CD8-positive, alpha-beta T cell (primary cell): ENCODE measurements at regions of chr16 and their contacts with region 1.

Region 1: DNA sequence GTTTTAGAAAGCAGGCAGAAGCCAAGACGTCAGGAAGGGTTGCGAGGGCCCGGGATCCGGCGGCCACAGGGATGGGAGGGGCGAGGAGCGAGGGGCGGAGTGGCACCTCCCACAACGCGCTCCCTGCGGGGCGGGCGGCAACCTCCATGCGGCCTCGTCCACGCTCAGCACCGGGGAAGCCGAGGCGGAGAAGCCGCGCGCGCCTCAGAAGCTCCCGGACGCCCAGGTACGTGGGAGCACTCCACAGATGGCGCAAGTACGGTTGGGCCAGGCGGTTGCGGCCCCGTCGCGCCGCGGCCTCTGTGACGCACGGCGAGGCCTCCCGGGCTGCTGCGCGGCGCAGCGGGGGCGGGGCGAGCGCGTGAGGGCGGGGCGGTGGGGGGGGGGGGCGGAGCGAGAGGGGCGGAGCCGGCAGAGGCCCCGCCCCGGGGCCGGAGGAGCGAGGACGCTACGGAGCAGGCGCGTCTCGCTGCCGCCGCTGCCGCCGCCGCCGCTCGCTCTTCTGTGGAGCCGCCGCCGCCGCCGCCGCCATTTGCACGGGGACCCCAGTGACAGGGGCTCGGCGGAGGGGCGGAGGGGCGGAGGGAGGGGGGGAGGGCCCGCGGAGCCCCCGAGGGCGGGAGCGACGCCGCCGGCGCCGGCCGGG is at the start of gene TENT4B:
- DNase-seq: peak; percentile 82 to 96 (median 91)
- ATAC-seq: peak; percentile 77
- H3K4me3 ChIP-seq: peak within 1 kb of the TSS; percentile 67 to 79
- H3K4me3 Mint-ChIP-seq: peak within 1 kb of the TSS; percentile 93
- H3K27ac ChIP-seq: peak within 1 kb of the TSS; percentile 93
- H3K27ac Mint-ChIP-seq: peak within 1 kb of the TSS; percentile 95
- H3K4me1 ChIP-seq: peaks cover 40% of the 10 kb centered on the region
- H3K4me1 Mint-ChIP-seq: peaks cover 37% of the 10 kb centered on the region
- H3K27me3 ChIP-seq: no peaks in the 10 kb centered on the region
- H3K27me3 Mint-ChIP-seq: no peaks in the 10 kb centered on the region
- CTCF ChIP-seq: no peak
- total RNA-seq, gene TENT4B: 60.2 to 62.1 TPM

Region 2: GRCh38 chr16:50024684-50025536 is 128.0 kb before region 1 on chr16 and contains the start of gene CNEP1R1:
- CTCF ChIA-PET with region 1: interaction called, 5 read pairs
- POLR2A ChIA-PET with region 1: interaction called, 7 read pairs
- intact Hi-C with region 1: loop called (anchors 1 kb)
- DNase-seq: peak; percentile 86 to 97 (median 91)
- ATAC-seq: peak; percentile 93
- H3K4me3 ChIP-seq: peak within 1 kb of the TSS; percentile 74 to 79
- H3K4me3 Mint-ChIP-seq: peak within 1 kb of the TSS; percentile 97
- H3K27ac ChIP-seq: peak within 1 kb of the TSS; percentile 49 to 65
- H3K27ac Mint-ChIP-seq: peak within 1 kb of the TSS; percentile 94
- H3K4me1 ChIP-seq: peaks cover 17% of the 10 kb centered on the region
- H3K4me1 Mint-ChIP-seq: peaks cover 27% of the 10 kb centered on the region
- H3K27me3 ChIP-seq: no peaks in the 10 kb centered on the region
- H3K27me3 Mint-ChIP-seq: no peaks in the 10 kb centered on the region
- CTCF ChIP-seq: peak; percentile 99
- total RNA-seq, gene CNEP1R1: 37.6 to 41.0 TPM

Region 3: DNA sequence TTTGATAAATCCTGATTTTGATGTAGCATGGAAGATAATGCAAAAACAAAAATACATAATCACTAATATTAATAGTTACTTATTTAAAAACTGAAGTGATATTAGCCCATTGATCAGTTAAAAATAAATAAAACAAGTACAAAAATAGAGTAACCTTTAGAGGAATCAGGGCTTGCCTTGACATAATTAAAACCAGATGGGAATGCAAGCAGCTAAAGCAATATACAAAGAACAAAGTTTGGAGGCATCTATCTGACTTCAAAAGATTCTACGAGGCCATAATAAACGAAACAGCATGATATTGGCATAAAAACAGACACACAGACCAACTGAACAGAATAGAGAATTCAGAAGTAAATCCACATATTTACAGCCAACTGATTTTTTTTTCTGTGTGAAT is 102.1 kb before region 1 on chr16:
- CTCF ChIA-PET with region 1: no interaction called
- POLR2A ChIA-PET with region 1: no interaction called
- intact Hi-C with region 1: no loop called
- DNase-seq: no peak
- ATAC-seq: no peak
- H3K4me3 ChIP-seq: no peak overlapping the region
- H3K4me3 Mint-ChIP-seq: no peak overlapping the region
- H3K27ac ChIP-seq: no peak overlapping the region
- H3K27ac Mint-ChIP-seq: no peak overlapping the region
- H3K4me1 ChIP-seq: no peaks in the 10 kb centered on the region
- H3K4me1 Mint-ChIP-seq: no peaks in the 10 kb centered on the region
- H3K27me3 ChIP-seq: no peaks in the 10 kb centered on the region
- H3K27me3 Mint-ChIP-seq: peaks cover 2% of the 10 kb centered on the region
- CTCF ChIP-seq: no peak

Region 4: DNA sequence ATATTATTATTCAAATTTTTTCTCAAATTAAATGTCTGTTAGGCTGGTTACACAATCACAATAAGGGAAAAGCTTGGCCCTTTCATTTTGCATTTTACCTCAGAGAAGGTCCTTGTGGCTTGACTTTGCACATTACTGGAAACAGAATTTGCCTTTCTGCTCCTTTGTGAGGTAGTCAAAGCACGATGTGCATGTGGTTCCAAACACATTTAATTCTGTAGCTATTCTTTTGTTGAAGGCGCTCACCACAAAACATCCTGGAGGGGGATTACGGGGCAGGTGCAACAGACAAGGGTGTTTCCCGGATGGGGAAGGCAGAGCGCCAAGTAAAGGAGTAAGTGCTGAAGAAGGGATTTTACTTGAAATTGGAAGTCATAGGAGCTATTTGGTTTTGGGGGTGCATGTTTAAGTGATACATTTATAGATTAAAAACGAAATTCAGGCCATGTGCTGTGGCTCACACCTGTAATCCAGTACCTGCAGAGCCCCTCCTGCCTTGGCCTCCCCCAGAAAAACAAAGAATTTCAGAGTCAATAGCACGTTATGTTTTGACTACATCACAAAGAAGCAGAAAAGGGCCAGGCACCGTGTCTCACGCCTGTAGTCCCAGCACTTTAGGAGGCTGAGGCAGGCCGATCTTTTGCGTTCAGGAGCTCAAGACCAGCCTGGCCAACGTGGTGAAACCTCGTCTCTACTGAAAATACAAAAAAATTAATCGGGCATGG is 31.0 kb before region 1 on chr16:
- CTCF ChIA-PET with region 1: no interaction called
- POLR2A ChIA-PET with region 1: no interaction called
- intact Hi-C with region 1: loop called in 1 of 2 experiments (anchors 1 kb)
- DNase-seq: peak in 8 of 9 experiments; percentile 4 to 83 (median 42)
- ATAC-seq: peak; percentile 89
- H3K4me3 ChIP-seq: no peak overlapping the region
- H3K4me3 Mint-ChIP-seq: no peak overlapping the region
- H3K27ac ChIP-seq: no peak overlapping the region
- H3K27ac Mint-ChIP-seq: peak overlapping the region; percentile 34
- H3K4me1 ChIP-seq: peaks cover 11% of the 10 kb centered on the region
- H3K4me1 Mint-ChIP-seq: peaks cover 15% of the 10 kb centered on the region
- H3K27me3 ChIP-seq: no peaks in the 10 kb centered on the region
- H3K27me3 Mint-ChIP-seq: no peaks in the 10 kb centered on the region
- CTCF ChIP-seq: no peak

Region 5: GRCh38 chr16:50210266-50211038 is 57.5 kb after region 1 on chr16:
- CTCF ChIA-PET with region 1: interaction called, 9 read pairs
- POLR2A ChIA-PET with region 1: interaction called, 6 read pairs
- intact Hi-C with region 1: loop called (anchors 1 to 2 kb)
- DNase-seq: peak; percentile 34 to 76 (median 60)
- ATAC-seq: peak; percentile 90
- H3K4me3 ChIP-seq: no peak overlapping the region
- H3K4me3 Mint-ChIP-seq: no peak overlapping the region
- H3K27ac ChIP-seq: no peak overlapping the region
- H3K27ac Mint-ChIP-seq: peak overlapping the region; percentile 72
- H3K4me1 ChIP-seq: peaks cover 3% of the 10 kb centered on the region
- H3K4me1 Mint-ChIP-seq: peaks cover 39% of the 10 kb centered on the region
- H3K27me3 ChIP-seq: no peaks in the 10 kb centered on the region
- H3K27me3 Mint-ChIP-seq: no peaks in the 10 kb centered on the region
- CTCF ChIP-seq: peak; percentile 61

Region 6: DNA sequence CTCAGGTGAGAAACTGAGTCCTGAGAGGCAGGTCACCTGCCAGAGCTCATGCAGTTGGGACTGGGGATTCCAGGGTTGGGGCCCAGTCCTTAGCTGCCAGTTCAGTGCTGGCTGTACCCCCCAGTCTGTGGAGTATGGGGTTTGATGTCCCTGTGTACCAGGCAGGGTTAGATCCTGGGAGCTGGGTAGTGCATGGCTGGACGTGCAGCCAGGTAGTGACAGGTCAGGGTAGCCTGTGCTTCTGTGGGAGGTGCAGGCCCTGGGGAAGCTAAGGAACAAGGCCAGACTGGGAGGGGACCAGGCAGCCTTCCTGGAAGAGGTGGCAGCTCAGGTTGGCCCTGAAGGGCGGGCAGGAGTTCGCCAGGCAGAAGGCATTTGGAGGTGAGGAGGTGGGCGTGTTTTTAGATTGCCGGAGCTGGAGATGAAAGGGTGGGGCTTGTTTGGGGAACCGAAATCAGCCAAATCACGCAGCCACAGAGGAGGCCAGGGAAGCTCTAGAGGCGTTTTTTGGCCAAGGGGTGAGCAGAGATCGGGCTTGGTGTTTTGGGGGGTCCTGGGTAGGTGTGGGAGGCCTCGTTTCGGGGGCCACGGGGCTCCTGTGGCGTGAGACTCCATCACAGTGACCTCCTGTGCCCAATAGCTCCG is 120.9 kb after region 1 on chr16:
- CTCF ChIA-PET with region 1: no interaction called
- POLR2A ChIA-PET with region 1: no interaction called
- intact Hi-C with region 1: loop called (anchors 2 to 5 kb)
- DNase-seq: peak in 5 of 9 experiments; percentile 39 to 68 (median 50)
- ATAC-seq: peak; percentile 32
- H3K4me3 ChIP-seq: peak overlapping the region; percentile 46 to 80
- H3K4me3 Mint-ChIP-seq: peak overlapping the region; percentile 86
- H3K27ac ChIP-seq: peak overlapping the region; percentile 81 to 88
- H3K27ac Mint-ChIP-seq: peak overlapping the region; percentile 98
- H3K4me1 ChIP-seq: peaks cover 97% of the 10 kb centered on the region
- H3K4me1 Mint-ChIP-seq: peaks cover 97% of the 10 kb centered on the region
- H3K27me3 ChIP-seq: no peaks in the 10 kb centered on the region
- H3K27me3 Mint-ChIP-seq: no peaks in the 10 kb centered on the region
- CTCF ChIP-seq: no peak

Region 7: GRCh38 chr16:50335196-50335958 is 182.4 kb after region 1 on chr16:
- CTCF ChIA-PET with region 1: no interaction called
- POLR2A ChIA-PET with region 1: no interaction called
- intact Hi-C with region 1: no loop called
- DNase-seq: peak in 7 of 9 experiments; percentile 27 to 86 (median 72)
- ATAC-seq: peak; percentile 76
- H3K4me3 ChIP-seq: no peak overlapping the region
- H3K4me3 Mint-ChIP-seq: peak overlapping the region; percentile 46
- H3K27ac ChIP-seq: peak overlapping the region; percentile 55 to 57
- H3K27ac Mint-ChIP-seq: peak overlapping the region; percentile 99
- H3K4me1 ChIP-seq: peaks cover 21% of the 10 kb centered on the region
- H3K4me1 Mint-ChIP-seq: peaks cover 74% of the 10 kb centered on the region
- H3K27me3 ChIP-seq: no peaks in the 10 kb centered on the region
- H3K27me3 Mint-ChIP-seq: no peaks in the 10 kb centered on the region
- CTCF ChIP-seq: no peak

Region 8: GRCh38 chr16:50741808-50742575 is 589.1 kb after region 1 on chr16 and contains the start of gene CYLD:
- CTCF ChIA-PET with region 1: no interaction called
- POLR2A ChIA-PET with region 1: no interaction called
- intact Hi-C with region 1: loop called (anchors 1 kb)
- DNase-seq: peak; percentile 97 to 100 (median 99)
- ATAC-seq: peak; percentile 88
- H3K4me3 ChIP-seq: peak within 1 kb of the TSS; percentile 91 to 93
- H3K4me3 Mint-ChIP-seq: peak within 1 kb of the TSS; percentile 98
- H3K27ac ChIP-seq: peak within 1 kb of the TSS; percentile 95 to 99
- H3K27ac Mint-ChIP-seq: peak within 1 kb of the TSS; percentile 99
- H3K4me1 ChIP-seq: peaks cover 36% of the 10 kb centered on the region
- H3K4me1 Mint-ChIP-seq: peaks cover 45% of the 10 kb centered on the region
- H3K27me3 ChIP-seq: no peaks in the 10 kb centered on the region
- H3K27me3 Mint-ChIP-seq: no peaks in the 10 kb centered on the region
- CTCF ChIP-seq: no peak
- total RNA-seq, gene CYLD: 341 TPM